Transverse colon (tissue), 4 donors: ENCODE measurements at regions of chr2 and their contacts with region 1.

Region 1: GRCh38 chr2:42132966-42133641 is 36.0 kb upstream of the EML4 start:
- DNase-seq: peak; percentile 85
- H3K4me3 ChIP-seq: peak overlapping the region in 1 of 4 donors; percentile 4
- H3K27ac ChIP-seq: peak overlapping the region; percentile 69 to 84 (median 76)
- H3K4me1 ChIP-seq: peaks cover 12 to 50% (median 27%) of the 10 kb centered on the region in 4 donors
- H3K27me3 ChIP-seq: no peaks in the 10 kb centered on the region
- CTCF ChIP-seq: no peak
- EP300 ChIP-seq: no peak
- POLR2A ChIP-seq: peak; percentile 56

Region 2: GRCh38 chr2:41540272-41540998 is 592.7 kb before region 1 on chr2:
- in situ Hi-C with region 1: no loop called
- intact Hi-C with region 1: loop called (anchors 5 kb)
- DNase-seq: no peak
- H3K4me3 ChIP-seq: no peak overlapping the region
- H3K27ac ChIP-seq: peak overlapping the region; percentile 44 to 60 (median 56)
- H3K4me1 ChIP-seq: no peaks in the 10 kb centered on the region
- H3K27me3 ChIP-seq: no peaks in the 10 kb centered on the region
- CTCF ChIP-seq: no peak
- EP300 ChIP-seq: no peak
- POLR2A ChIP-seq: no peak

Region 3: GRCh38 chr2:42210203-42210602 is 77.1 kb after region 1 on chr2:
- in situ Hi-C with region 1: no loop called
- intact Hi-C with region 1: no loop called
- DNase-seq: no peak
- H3K4me3 ChIP-seq: no peak overlapping the region
- H3K27ac ChIP-seq: no peak overlapping the region
- H3K4me1 ChIP-seq: no peaks in the 10 kb centered on the region
- H3K27me3 ChIP-seq: no peaks in the 10 kb centered on the region
- CTCF ChIP-seq: no peak
- EP300 ChIP-seq: no peak
- POLR2A ChIP-seq: no peak